ENCODE measurements at regions of chr9 and their contacts with region 1.

Region 1: DNA sequence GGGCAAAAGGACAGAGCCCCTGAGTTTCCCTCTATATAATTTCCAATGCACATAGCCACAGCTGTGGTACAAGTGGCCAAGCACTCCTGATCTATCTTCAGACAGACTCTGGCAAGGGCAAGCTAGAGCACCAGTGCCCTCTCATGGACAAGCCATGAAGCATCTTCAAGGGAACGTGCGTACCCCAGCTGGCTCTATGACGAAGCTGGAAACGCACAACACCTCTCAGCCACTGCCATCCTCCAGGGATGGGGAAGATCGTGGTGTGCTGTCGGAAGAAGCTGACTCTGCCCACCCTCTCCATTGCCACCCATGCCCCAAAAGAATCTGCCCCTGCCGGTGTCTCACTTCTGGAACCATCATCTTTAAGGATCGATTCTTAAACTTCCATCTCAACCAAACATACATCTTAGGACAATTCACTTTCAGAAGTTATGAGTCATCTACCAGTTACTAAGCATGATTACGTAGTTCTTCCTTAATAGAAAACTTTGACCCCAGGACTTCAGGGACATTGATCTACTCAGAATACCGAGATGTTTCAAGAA is 482.9 kb downstream of the AGTPBP1 start:
- DNase-seq: peak in 4 of 5 donors; percentile 22 to 53 (median 45)
- ATAC-seq: peak; percentile 77 to 88 (median 87)
- H3K4me3 ChIP-seq: no peak overlapping the region
- H3K27ac ChIP-seq: no peak overlapping the region
- H3K4me1 ChIP-seq: peaks cover 0 to 6% (median 0%) of the 10 kb centered on the region in 12 donors
- H3K27me3 ChIP-seq: peaks cover 0 to 7% (median 0%) of the 10 kb centered on the region in 9 donors
- CTCF ChIP-seq: peak; percentile 42 to 74 (median 67)
- POLR2A ChIP-seq: no peak

Region 2: GRCh38 chr9:84404095-84404686 is 854.7 kb before region 1 on chr9:
- intact Hi-C with region 1: loop called in 5 of 10 experiments (anchors 5 to 10 kb)
- DNase-seq: no peak
- ATAC-seq: no peak
- H3K4me3 ChIP-seq: no peak overlapping the region
- H3K27ac ChIP-seq: no peak overlapping the region
- H3K4me1 ChIP-seq: no peaks in the 10 kb centered on the region
- H3K27me3 ChIP-seq: no peaks in the 10 kb centered on the region
- CTCF ChIP-seq: peak; percentile 43 to 64 (median 56)
- POLR2A ChIP-seq: no peak

Region 3: GRCh38 chr9:85182383-85182782 is 76.5 kb before region 1 on chr9:
- intact Hi-C with region 1: no loop called
- DNase-seq: no peak
- ATAC-seq: no peak
- H3K4me3 ChIP-seq: no peak overlapping the region
- H3K27ac ChIP-seq: no peak overlapping the region
- H3K4me1 ChIP-seq: no peaks in the 10 kb centered on the region
- H3K27me3 ChIP-seq: peaks cover 0 to 19% (median 0%) of the 10 kb centered on the region in 9 donors
- CTCF ChIP-seq: no peak
- POLR2A ChIP-seq: no peak

Region 4: GRCh38 chr9:85200726-85201404 is 58.0 kb before region 1 on chr9:
- intact Hi-C with region 1: no loop called
- DNase-seq: no peak
- ATAC-seq: no peak
- H3K4me3 ChIP-seq: no peak overlapping the region
- H3K27ac ChIP-seq: no peak overlapping the region
- H3K4me1 ChIP-seq: no peaks in the 10 kb centered on the region
- H3K27me3 ChIP-seq: peaks cover 0 to 3% (median 0%) of the 10 kb centered on the region in 9 donors
- CTCF ChIP-seq: no peak
- POLR2A ChIP-seq: no peak

Region 5: GRCh38 chr9:85392260-85392659 is 133.4 kb after region 1 on chr9:
- intact Hi-C with region 1: no loop called
- DNase-seq: no peak
- ATAC-seq: no peak
- H3K4me3 ChIP-seq: no peak overlapping the region
- H3K27ac ChIP-seq: no peak overlapping the region
- H3K4me1 ChIP-seq: no peaks in the 10 kb centered on the region
- H3K27me3 ChIP-seq: peaks cover 0 to 7% (median 0%) of the 10 kb centered on the region in 9 donors
- CTCF ChIP-seq: no peak
- POLR2A ChIP-seq: no peak